Heart left ventricle (tissue), 16 donors: ENCODE measurements at regions of chr7 and their contacts with region 1.

Region 1: GRCh38 chr7:107725151-107725740 is 18.7 kb upstream of the CBLL1 start:
- DNase-seq: peak in 3 of 5 donors; percentile 31 to 45 (median 36)
- ATAC-seq: no peak
- H3K4me3 ChIP-seq: no peak overlapping the region
- H3K27ac ChIP-seq: no peak overlapping the region
- H3K4me1 ChIP-seq: no peaks in the 10 kb centered on the region
- H3K27me3 ChIP-seq: peaks cover 0 to 14% (median 0%) of the 10 kb centered on the region in 9 donors
- CTCF ChIP-seq: peak; percentile 61 to 83 (median 77)
- POLR2A ChIP-seq: no peak

Region 2: GRCh38 chr7:107194049-107194448 is 531.2 kb before region 1 on chr7:
- intact Hi-C with region 1: loop called in 3 of 10 experiments (anchors 5 to 10 kb)
- DNase-seq: no peak
- ATAC-seq: no peak
- H3K4me3 ChIP-seq: no peak overlapping the region
- H3K27ac ChIP-seq: peak overlapping the region in 2 of 12 donors; percentile 0 to 31
- H3K4me1 ChIP-seq: peaks cover 0 to 13% (median 0%) of the 10 kb centered on the region in 12 donors
- H3K27me3 ChIP-seq: no peaks in the 10 kb centered on the region
- CTCF ChIP-seq: peak in 2 of 12 donors; percentile 13 to 22
- POLR2A ChIP-seq: no peak

Region 3: DNA sequence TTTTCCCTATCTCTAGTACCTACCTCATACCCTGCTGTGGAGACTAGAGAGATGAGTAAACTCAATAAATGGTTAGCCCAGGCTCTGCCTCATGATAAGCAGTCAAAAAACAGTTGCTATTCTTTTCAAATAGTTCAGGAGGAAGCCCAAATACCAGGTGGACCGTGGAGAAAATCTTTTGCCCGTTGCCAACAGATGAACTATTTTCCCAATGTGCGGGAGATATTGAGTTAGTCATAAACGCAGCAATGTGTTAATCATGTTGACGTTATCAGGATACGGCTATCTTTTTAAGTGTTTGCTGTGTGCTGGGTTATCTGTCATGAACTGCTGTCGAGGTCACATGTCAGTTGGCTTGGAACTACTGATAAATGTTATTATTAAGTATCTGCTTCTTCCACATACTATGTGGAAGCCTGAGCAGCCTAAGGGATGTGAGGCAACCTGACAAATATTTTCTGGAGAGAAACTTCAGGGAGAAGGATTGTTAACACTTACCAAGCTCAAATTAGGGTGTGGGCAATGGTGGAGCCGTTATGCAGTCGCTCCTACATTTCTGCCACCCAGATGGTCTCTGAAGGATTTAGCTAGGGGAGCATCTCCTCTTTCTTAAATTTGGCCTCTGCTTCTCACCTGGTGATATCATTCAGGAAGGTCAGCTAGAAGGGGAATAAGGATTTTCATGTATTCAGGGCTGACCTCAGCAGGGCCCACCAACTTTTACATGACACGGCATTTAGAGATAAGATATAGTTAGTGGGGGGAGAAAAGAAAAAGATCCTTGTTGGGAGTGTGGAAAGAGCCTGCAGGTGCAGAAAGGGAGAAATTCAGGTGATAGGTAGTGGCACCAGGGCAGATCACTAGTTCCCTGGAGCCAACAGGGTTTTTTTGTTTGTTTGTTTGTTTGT is 111.2 kb after region 1 on chr7:
- intact Hi-C with region 1: no loop called
- DNase-seq: no peak
- ATAC-seq: peak in 1 of 4 donors; percentile 60
- H3K4me3 ChIP-seq: no peak overlapping the region
- H3K27ac ChIP-seq: no peak overlapping the region
- H3K4me1 ChIP-seq: peaks cover 0 to 4% (median 0%) of the 10 kb centered on the region in 12 donors
- H3K27me3 ChIP-seq: peaks cover 0 to 2% (median 0%) of the 10 kb centered on the region in 9 donors
- CTCF ChIP-seq: no peak
- POLR2A ChIP-seq: no peak

Region 4: GRCh38 chr7:107966711-107967110 is 241.5 kb after region 1 on chr7:
- intact Hi-C with region 1: no loop called
- DNase-seq: peak in 4 of 5 donors; percentile 64 to 75 (median 72)
- ATAC-seq: peak; percentile 82 to 93 (median 88)
- H3K4me3 ChIP-seq: no peak overlapping the region
- H3K27ac ChIP-seq: peak overlapping the region; percentile 6 to 84 (median 66)
- H3K4me1 ChIP-seq: peaks cover 0 to 56% (median 38%) of the 10 kb centered on the region in 12 donors
- H3K27me3 ChIP-seq: no peaks in the 10 kb centered on the region
- CTCF ChIP-seq: peak in 7 of 12 donors; percentile 7 to 43 (median 36)
- POLR2A ChIP-seq: no peak